ENCODE measurements at regions of chr2 and their contacts with region 1.

Region 1: DNA sequence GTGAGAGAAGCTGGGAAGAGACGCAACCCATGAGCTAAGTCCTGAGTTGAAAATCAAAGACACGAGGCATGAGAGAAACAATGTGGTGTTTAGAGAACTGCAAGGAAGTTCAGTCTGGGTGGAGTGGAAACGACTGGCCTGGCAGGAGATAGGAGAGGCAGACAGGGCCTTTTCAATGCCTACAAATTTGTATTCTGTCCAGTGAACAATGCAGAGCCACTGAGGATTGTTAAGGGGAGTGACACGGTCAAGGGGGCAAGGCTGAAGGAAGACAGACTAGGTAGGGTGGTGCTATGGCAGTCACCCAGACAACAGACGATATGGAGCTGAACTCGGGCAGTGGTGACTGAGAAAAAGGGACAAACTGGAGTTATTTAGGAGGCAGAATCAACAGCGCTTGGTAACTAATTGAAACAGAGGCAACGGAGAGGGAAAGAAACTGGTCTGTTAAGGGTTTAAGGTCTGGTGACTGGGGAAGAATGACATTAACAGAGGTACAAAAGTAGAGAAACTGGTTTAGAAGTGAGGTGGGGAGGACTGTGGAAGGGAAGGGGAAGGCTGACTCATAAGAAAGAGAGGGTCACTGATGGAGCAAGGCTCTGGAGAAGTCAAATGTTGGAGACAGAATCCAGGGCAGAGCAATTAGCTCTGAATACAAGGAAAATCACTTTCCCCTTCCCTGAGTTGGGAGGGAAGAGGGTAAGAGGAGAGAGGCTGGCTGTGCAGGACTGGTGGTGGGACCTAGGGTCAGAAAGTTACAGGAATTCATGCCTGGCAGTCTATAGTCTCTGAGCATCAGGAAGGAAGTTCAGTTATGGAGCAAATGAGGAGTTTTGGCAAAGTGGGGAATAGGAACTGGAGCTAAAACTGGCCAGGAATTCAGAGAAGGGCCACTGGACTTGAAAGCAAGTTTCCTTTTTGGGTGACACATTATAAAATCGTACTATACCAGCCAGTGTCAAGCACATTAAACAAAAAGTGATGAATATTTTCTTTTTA is 63.4 kb upstream of the CHRNA1 start:
- DNase-seq: peak; percentile 82
- H3K4me3 ChIP-seq: peak overlapping the region in 1 of 3 experiments; percentile 6
- H3K27ac ChIP-seq: peak overlapping the region; percentile 93
- H3K4me1 ChIP-seq: peaks cover 35% of the 10 kb centered on the region
- H3K27me3 ChIP-seq: no peaks in the 10 kb centered on the region
- CTCF ChIP-seq: no peak
- POLR2A ChIP-seq: peak; percentile 53

Region 2: GRCh38 chr2:174878537-174879147 is 51.0 kb after region 1 on chr2:
- CTCF ChIA-PET with region 1: interaction called, 6 read pairs
- POLR2A ChIA-PET with region 1: no interaction called
- dilution Hi-C with region 1: no loop called
- intact Hi-C with region 1: loop called (anchors 5 kb)
- DNase-seq: peak; percentile 82
- H3K4me3 ChIP-seq: peak overlapping the region; percentile 15 to 91 (median 68)
- H3K27ac ChIP-seq: no peak overlapping the region
- H3K4me1 ChIP-seq: peaks cover 7% of the 10 kb centered on the region
- H3K27me3 ChIP-seq: no peaks in the 10 kb centered on the region
- CTCF ChIP-seq: no peak
- POLR2A ChIP-seq: no peak

Region 3: DNA sequence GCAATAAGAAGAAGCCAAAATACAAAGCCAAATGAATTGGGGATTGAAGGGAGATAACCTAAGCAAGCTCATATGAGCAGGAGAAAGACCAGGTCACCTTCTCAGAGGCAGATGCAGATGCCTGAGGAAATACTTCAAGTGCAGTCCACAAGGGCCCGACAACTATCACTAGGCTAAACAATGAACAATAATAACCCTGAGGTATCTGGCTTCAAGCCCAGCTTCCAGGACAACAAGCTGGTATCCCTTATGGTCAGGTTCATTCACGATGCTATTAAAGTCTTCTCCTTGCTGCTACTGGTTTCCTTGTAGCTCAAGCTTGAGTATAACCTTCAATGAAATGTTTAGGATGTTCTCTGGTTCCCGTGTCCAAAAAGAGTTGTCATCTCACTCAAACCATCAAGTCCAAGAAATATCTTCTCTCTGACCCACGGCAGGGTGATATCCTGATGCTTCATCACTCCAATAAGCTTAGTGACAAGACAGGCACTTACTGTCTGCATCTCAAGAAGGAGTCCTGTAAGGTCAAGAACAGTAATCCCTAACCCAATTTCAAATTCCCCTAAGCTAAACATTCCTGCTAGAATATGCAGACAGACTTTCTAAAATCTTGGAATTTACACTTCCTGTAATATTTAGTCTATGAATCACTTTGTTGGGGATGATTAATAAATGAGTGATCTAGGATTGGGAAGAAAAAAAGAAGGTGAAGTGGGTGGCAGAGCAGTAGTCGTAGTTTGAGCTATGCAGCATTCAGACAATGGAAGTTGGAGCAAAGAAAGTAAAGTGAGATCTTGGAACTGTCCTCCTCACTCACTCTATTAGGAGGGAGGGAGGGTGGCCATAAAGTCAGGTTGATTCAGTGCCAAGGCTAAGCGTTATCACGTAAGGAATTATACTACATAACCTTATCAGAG is 144.5 kb after region 1 on chr2:
- CTCF ChIA-PET with region 1: interaction called, 3 read pairs
- POLR2A ChIA-PET with region 1: no interaction called
- dilution Hi-C with region 1: no loop called
- intact Hi-C with region 1: loop called (anchors 5 kb)
- DNase-seq: peak; percentile 96
- H3K4me3 ChIP-seq: peak overlapping the region in 1 of 3 experiments; percentile 34
- H3K27ac ChIP-seq: peak overlapping the region; percentile 93
- H3K4me1 ChIP-seq: peaks cover 34% of the 10 kb centered on the region
- H3K27me3 ChIP-seq: no peaks in the 10 kb centered on the region
- CTCF ChIP-seq: no peak
- POLR2A ChIP-seq: no peak

Region 4: DNA sequence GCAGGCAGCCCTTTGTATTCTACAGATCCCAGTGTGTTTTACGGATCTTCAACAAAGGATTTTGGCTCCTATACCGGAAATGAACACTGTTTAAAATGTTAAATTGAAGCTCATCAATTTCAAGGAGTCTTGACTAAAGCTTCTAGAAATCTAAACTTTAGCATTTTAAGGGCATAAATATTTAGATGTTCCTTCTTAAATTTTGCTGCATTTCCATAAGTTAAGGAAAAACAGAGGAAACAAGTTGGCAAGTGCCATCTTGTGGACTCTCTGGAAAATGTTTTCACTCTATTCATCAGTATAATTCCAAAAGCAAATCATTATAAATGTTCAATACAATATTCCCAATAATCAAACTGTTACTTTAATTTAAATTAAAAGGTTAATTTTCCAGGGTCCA is 158.0 kb after region 1 on chr2:
- CTCF ChIA-PET with region 1: interaction called, 7 read pairs
- POLR2A ChIA-PET with region 1: interaction called, 3 read pairs
- dilution Hi-C with region 1: no loop called
- intact Hi-C with region 1: loop called (anchors 2 kb)
- DNase-seq: peak; percentile 55
- H3K4me3 ChIP-seq: no peak overlapping the region
- H3K27ac ChIP-seq: no peak overlapping the region
- H3K4me1 ChIP-seq: no peaks in the 10 kb centered on the region
- H3K27me3 ChIP-seq: no peaks in the 10 kb centered on the region
- CTCF ChIP-seq: peak; percentile 21 to 36
- POLR2A ChIP-seq: no peak

Region 5: GRCh38 chr2:175203621-175204496 is 376.2 kb after region 1 on chr2:
- CTCF ChIA-PET with region 1: no interaction called
- POLR2A ChIA-PET with region 1: no interaction called
- dilution Hi-C with region 1: no loop called
- intact Hi-C with region 1: no loop called
- DNase-seq: peak; percentile 54
- H3K4me3 ChIP-seq: no peak overlapping the region
- H3K27ac ChIP-seq: no peak overlapping the region
- H3K4me1 ChIP-seq: no peaks in the 10 kb centered on the region
- H3K27me3 ChIP-seq: peaks cover 0 to 13% of the 10 kb centered on the region in 2 experiments
- CTCF ChIP-seq: peak; percentile 39 to 54
- POLR2A ChIP-seq: no peak